IMR-90 (cell line): ENCODE measurements at regions of chr15 and their contacts with region 1.

Region 1: GRCh38 chr15:58269455-58270414 is 131.6 kb downstream of the AQP9 start:
- DNase-seq: peak; percentile 71
- ATAC-seq: peak; percentile 98
- H3K4me3 ChIP-seq: no peak overlapping the region
- H3K27ac ChIP-seq: 0 out of 2 replicates have a peak overlapping the region, but pooled peaks have one; percentile 33
- H3K4me1 ChIP-seq: no peaks in the 10 kb centered on the region
- H3K27me3 ChIP-seq: 0 out of 2 replicates have a peak, but pooled peaks cover 1% of the 10 kb centered on the region
- CTCF ChIP-seq: peak; percentile 84
- POLR2A ChIP-seq: no peak
- RAD21 ChIP-seq: peak; percentile 95

Region 2: GRCh38 chr15:58331903-58332675 is 62.4 kb after region 1 on chr15:
- CTCF ChIA-PET with region 1: no interaction called
- POLR2A ChIA-PET with region 1: interaction called, 13 read pairs
- dilution Hi-C with region 1: no loop called
- in situ Hi-C with region 1: no loop called
- intact Hi-C with region 1: no loop called
- DNase-seq: peak; percentile 100
- ATAC-seq: peak; percentile 87
- H3K4me3 ChIP-seq: no peak overlapping the region
- H3K27ac ChIP-seq: peak overlapping the region; percentile 93
- H3K4me1 ChIP-seq: peaks cover 25% of the 10 kb centered on the region
- H3K27me3 ChIP-seq: no peaks in the 10 kb centered on the region
- CTCF ChIP-seq: no peak
- POLR2A ChIP-seq: no peak
- RAD21 ChIP-seq: peak; percentile 42

Region 3: GRCh38 chr15:58475573-58476524 is 206.1 kb after region 1 on chr15:
- CTCF ChIA-PET with region 1: no interaction called
- POLR2A ChIA-PET with region 1: no interaction called
- dilution Hi-C with region 1: no loop called
- in situ Hi-C with region 1: no loop called
- intact Hi-C with region 1: loop called (anchors 10 kb)
- DNase-seq: peak; percentile 36
- ATAC-seq: no peak
- H3K4me3 ChIP-seq: no peak overlapping the region
- H3K27ac ChIP-seq: no peak overlapping the region
- H3K4me1 ChIP-seq: peaks cover 19% of the 10 kb centered on the region
- H3K27me3 ChIP-seq: no peaks in the 10 kb centered on the region
- CTCF ChIP-seq: no peak
- POLR2A ChIP-seq: no peak
- RAD21 ChIP-seq: no peak

Region 4: DNA sequence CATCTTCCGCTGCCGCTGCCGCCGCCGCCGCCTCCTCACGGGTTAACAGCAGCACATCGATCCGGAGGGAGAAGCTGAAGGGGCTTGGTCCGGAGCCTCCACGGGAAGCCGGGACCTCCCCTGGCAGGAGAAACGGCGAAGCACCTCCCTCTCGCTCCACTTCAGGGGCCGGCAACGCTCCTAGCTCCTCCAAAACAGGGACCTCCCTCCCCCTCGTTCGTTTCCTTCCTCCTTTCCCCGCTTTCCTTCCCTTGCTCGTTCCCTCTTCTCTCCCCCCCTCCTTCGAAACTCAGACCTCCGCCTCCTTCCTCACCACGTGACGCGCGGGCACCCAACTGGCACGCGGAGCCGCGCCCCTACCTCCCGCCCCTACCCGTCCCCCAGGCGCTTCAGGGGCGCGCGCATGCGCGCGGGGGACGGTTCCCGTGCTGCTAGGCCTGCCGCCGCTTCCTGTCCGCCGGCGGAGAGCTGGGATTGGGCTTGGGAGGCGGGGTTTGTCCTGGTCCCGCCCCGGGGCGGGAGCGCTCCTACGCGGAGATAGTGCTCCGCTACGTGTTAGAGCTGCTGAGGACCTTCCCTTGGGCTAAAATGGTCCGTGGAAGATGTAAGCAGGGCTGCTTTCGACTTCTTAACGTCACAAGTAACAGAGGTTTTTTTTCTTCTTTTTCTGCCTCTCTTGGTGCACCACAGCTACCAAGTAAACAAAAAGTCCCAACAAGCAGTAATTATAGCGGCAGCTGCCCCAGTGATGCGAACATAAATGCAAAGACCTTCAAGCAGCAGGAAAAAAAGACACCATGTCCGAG is 480.0 kb after region 1 on chr15 and contains the start of gene ADAM10:
- CTCF ChIA-PET with region 1: interaction called, 3 read pairs
- POLR2A ChIA-PET with region 1: no interaction called
- dilution Hi-C with region 1: no loop called
- in situ Hi-C with region 1: no loop called
- intact Hi-C with region 1: loop called (anchors 2 kb)
- DNase-seq: peak; percentile 99
- ATAC-seq: peak; percentile 94
- H3K4me3 ChIP-seq: peak within 1 kb of the TSS; percentile 74
- H3K27ac ChIP-seq: peak within 1 kb of the TSS; percentile 93
- H3K4me1 ChIP-seq: no peaks in the 10 kb centered on the region
- H3K27me3 ChIP-seq: no peaks in the 10 kb centered on the region
- CTCF ChIP-seq: no peak
- POLR2A ChIP-seq: peak; percentile 86
- RAD21 ChIP-seq: no peak; the same call in 1 of the 2 replicates
- total RNA-seq, gene ADAM10: 185 and 217 TPM in 2 replicates

Region 5: DNA sequence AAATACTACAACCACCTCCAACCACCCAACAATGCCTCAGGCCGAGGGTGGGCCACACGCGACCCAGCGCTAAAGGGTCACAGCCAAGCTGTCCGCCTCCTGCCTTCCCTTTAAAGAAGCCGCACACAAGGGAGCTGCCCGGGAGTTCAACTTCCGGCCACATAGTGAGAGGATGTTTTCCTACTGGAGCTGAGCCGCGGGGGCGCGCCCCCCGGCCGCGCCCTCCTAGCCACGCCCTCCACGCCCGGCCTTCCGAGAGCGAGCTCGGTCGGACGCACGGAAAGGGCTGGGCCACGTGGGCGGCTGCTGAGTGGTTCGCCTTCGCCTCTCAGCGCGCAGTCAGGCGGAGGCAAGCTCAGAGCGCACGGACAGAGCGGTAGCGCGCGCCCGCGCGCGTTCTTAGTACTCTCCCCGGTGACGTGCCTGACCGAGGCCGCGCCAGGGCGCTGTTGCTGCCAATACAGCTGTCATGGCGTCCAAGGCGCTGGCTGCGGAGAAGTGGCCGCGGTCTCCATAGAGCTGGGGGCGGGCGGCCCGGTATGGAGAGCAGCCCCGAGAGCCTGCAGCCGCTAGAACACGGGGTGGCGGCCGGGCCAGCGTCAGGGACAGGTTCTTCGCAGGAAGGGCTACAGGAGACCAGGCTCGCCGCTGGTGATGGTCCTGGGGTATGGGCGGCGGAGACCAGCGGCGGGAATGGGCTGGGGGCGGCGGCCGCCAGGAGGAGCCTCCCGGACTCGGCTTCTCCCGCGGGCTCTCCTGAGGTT is 501.3 kb after region 1 on chr15 and contains the start of gene MINDY2:
- CTCF ChIA-PET with region 1: interaction called, 4 read pairs
- POLR2A ChIA-PET with region 1: no interaction called
- dilution Hi-C with region 1: no loop called
- in situ Hi-C with region 1: no loop called
- intact Hi-C with region 1: loop called (anchors 5 kb)
- DNase-seq: peak; percentile 99
- ATAC-seq: peak; percentile 95
- H3K4me3 ChIP-seq: peak within 1 kb of the TSS; percentile 88
- H3K27ac ChIP-seq: peak within 1 kb of the TSS; percentile 93
- H3K4me1 ChIP-seq: no peaks in the 10 kb centered on the region
- H3K27me3 ChIP-seq: no peaks in the 10 kb centered on the region
- CTCF ChIP-seq: peak; percentile 33; the same call in 1 of the 2 replicates
- POLR2A ChIP-seq: peak; percentile 67; the same call in 1 of the 2 replicates
- RAD21 ChIP-seq: peak; percentile 28
- total RNA-seq, gene MINDY2: 9.3 and 15.0 TPM in 2 replicates